ENCODE measurements at regions of chr15 and their contacts with region 1.

Region 1: DNA sequence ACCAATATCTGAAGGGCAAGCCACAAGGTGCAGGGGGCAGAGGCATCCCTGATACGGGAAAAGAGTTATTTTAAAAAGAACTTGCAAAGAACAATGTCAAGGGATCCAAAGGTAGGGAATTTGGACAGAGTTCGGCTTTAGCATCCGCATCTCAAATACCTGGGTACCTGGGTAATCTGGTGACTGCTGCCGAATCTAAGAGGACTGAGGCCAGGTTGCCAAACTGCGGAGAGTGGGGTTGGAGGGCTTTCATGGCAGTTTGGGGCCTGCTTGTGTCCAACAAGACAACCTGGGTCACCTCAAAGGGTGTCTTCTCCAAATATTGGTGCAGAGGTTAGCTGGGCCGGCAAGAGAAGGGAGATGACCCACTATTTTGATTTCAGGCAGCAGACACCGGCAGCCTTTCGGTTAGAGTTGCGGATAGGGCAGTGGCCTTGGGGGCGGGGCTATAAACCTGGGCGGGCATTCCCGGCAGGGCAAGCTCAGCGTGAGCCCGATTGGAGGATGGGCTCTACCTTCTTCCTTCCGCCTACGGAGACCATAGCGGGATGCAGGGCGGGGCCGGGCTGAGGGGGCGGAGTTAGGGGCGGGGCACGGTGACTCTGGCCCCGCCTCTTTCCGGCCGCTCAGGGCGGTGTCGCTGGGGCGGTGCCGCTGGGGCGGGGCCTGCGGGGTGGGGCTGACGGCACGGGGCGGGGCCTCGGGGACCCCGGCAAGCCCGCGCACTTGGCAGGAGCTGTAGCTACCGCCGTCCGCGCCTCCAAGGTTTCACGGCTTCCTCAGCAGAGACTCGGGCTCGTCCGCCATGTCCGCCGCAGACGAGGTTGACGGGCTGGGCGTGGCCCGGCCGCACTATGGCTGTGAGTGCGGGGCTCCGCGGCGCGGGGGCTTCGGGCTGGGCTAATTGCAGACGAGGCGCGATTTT is at the start of gene IQGAP1:
- DNase-seq: peak; percentile 98
- H3K4me3 Mint-ChIP-seq: peak within 1 kb of the TSS; percentile 98
- H3K27ac Mint-ChIP-seq: peak within 1 kb of the TSS; percentile 98
- H3K4me1 Mint-ChIP-seq: peaks cover 48% of the 10 kb centered on the region
- H3K27me3 Mint-ChIP-seq: no peaks in the 10 kb centered on the region
- total RNA-seq, gene IQGAP1: 222 to 296 TPM

Region 2: GRCh38 chr15:90352109-90352893 is 35.5 kb before region 1 on chr15 and contains the start of gene ZNF774:
- CTCF ChIA-PET with region 1: interaction called, 6 read pairs
- POLR2A ChIA-PET with region 1: interaction called, 11 read pairs
- DNase-seq: peak; percentile 94
- H3K4me3 Mint-ChIP-seq: peak within 1 kb of the TSS; percentile 81
- H3K27ac Mint-ChIP-seq: peak within 1 kb of the TSS; percentile 71
- H3K4me1 Mint-ChIP-seq: peaks cover 19% of the 10 kb centered on the region
- H3K27me3 Mint-ChIP-seq: no peaks in the 10 kb centered on the region
- total RNA-seq, gene ZNF774: 1.1 to 2.1 TPM

Region 3: DNA sequence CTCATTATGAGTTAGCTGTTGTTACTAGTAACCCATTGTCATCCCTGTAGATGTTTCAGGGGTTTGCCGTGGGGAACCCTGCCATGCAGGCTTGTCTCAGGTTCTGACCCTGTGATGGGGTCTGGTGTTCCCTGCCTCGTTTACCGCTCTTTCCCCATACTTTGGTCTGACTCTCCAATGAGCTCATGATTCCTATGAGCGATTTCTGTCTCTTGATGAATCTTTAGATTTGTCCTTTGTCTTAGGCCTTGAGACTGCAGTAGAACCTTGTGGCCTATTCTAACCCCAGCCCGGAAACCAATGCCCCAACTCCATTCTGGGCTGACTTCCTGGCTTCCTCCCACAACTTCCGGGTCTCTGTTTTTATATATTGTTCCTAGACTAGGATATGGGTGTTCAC is 11.0 kb before region 1 on chr15:
- CTCF ChIA-PET with region 1: interaction called, 13 read pairs
- POLR2A ChIA-PET with region 1: interaction called, 6 read pairs
- DNase-seq: peak; percentile 82
- H3K4me3 Mint-ChIP-seq: peak overlapping the region; percentile 48
- H3K27ac Mint-ChIP-seq: peak overlapping the region; percentile 89
- H3K4me1 Mint-ChIP-seq: peaks cover 39% of the 10 kb centered on the region
- H3K27me3 Mint-ChIP-seq: no peaks in the 10 kb centered on the region

Region 4: GRCh38 chr15:90400406-90401314 is 12.9 kb after region 1 on chr15:
- CTCF ChIA-PET with region 1: interaction called, 12 read pairs
- POLR2A ChIA-PET with region 1: interaction called, 6 read pairs
- DNase-seq: peak; percentile 84
- H3K4me3 Mint-ChIP-seq: peak overlapping the region; percentile 59
- H3K27ac Mint-ChIP-seq: peak overlapping the region; percentile 91
- H3K4me1 Mint-ChIP-seq: peaks cover 62% of the 10 kb centered on the region
- H3K27me3 Mint-ChIP-seq: no peaks in the 10 kb centered on the region

Region 5: DNA sequence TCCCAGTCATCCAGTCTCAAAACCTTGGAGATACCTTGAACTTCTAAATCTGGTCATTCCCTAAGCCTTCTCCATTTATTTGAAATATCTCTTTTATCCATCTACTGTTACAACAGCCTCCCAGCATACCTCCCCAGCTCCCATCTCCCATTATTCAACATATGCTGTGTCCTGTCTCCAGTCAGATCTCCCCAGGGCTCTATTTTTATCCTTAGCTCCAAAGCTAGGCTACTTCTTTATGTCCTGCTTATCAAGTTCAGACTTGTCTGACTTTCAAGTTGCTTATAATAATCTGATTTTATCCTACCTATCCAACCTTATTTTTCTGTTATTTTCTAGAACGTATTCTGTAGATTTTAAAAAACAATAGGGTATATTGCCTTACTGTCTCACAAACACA is 44.5 kb after region 1 on chr15:
- CTCF ChIA-PET with region 1: no interaction called
- POLR2A ChIA-PET with region 1: no interaction called
- DNase-seq: no peak
- H3K4me3 Mint-ChIP-seq: no peak overlapping the region
- H3K27ac Mint-ChIP-seq: no peak overlapping the region
- H3K4me1 Mint-ChIP-seq: peaks cover 19% of the 10 kb centered on the region
- H3K27me3 Mint-ChIP-seq: no peaks in the 10 kb centered on the region

Measured in activated CD4-positive, alpha-beta T cell treated with anti-CD3 and anti-CD28 coated beads, Interleukin-2, amount 10 ng/mL, durations not matched to agents 7 days and 5 days (primary cell).